CD4-positive, alpha-beta T cell (primary cell): ENCODE measurements at regions of chr2 and their contacts with region 1.

Region 1: DNA sequence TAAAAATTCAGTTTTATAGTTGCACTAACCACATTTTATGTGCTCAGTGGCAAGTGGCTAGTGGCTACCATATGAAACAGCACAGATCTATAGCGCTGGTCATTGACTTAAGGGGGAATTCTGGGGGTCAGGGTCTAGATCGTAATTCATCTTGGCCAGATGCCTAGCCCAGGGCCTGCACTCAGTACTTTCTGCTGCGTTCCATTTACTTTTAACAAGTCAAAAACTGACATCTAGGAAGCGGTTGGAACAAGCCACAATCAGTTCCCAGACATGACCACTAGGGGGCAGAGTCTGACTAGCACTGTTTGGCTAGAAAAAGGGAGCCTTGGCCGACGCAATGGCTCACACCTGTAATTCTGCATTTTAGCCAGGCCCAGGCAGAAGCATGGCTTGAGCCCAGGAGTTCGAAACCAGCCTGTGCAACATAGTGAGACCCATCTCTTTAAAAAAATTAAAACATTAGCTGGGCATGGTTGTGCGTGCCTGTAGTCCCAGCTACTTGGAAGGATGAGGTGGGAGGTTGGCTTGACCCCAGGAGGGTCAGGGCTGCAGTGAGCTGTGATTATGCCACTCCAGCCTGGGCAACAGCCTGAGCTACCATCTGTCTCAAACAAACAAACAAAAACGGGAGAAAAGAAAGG is 9.0 kb upstream of the TMBIM1 start:
- DNase-seq: peak; percentile 79 to 93 (median 86)
- ATAC-seq: peak; percentile 99
- H3K4me3 ChIP-seq: no peak overlapping the region
- H3K4me3 Mint-ChIP-seq: no peak overlapping the region
- H3K27ac ChIP-seq: no peak overlapping the region
- H3K27ac Mint-ChIP-seq: peak overlapping the region; percentile 4
- H3K4me1 ChIP-seq: peaks cover 8% of the 10 kb centered on the region
- H3K4me1 Mint-ChIP-seq: peaks cover 7% of the 10 kb centered on the region
- H3K27me3 ChIP-seq: no peaks in the 10 kb centered on the region
- H3K27me3 Mint-ChIP-seq: no peaks in the 10 kb centered on the region
- CTCF ChIP-seq: peak; percentile 87

Region 2: DNA sequence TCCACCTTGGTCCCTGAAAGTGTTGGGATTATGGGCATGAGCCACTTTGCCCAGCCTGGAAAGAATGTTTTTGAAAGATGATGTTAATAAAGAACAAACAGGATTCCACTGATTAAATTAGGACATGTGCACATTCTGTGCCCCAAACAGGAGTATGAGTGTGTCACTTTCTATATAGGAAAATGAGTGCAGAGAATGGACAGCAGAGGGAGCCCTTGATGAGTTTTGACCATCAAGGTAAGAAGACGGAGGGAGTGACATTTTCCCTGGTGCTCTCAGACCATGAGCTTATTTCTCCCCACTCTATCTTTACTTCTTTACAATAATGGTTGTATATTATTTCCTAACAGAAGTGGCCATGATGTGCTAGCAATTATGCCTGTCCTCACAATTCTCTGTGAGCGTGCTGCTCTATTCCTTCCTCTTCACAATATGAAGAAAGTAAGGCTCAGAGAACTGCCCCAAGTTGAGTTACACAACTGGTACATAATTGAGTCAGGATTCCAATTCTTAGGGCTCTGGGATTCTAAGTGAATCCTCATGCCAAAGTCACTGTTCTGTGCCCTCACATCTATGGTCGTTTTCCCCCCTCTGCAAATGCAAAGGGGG is 1782.0 kb before region 1 on chr2:
- CTCF ChIA-PET with region 1: no interaction called
- POLR2A ChIA-PET with region 1: no interaction called
- intact Hi-C with region 1: no loop called
- DNase-seq: peak in 9 of 14 experiments; percentile 5 to 70 (median 28)
- ATAC-seq: no peak
- H3K4me3 ChIP-seq: no peak overlapping the region
- H3K4me3 Mint-ChIP-seq: no peak overlapping the region
- H3K27ac ChIP-seq: no peak overlapping the region
- H3K27ac Mint-ChIP-seq: no peak overlapping the region
- H3K4me1 ChIP-seq: no peaks in the 10 kb centered on the region
- H3K4me1 Mint-ChIP-seq: no peaks in the 10 kb centered on the region
- H3K27me3 ChIP-seq: no peaks in the 10 kb centered on the region
- H3K27me3 Mint-ChIP-seq: no peaks in the 10 kb centered on the region
- CTCF ChIP-seq: peak; percentile 70

Region 3: DNA sequence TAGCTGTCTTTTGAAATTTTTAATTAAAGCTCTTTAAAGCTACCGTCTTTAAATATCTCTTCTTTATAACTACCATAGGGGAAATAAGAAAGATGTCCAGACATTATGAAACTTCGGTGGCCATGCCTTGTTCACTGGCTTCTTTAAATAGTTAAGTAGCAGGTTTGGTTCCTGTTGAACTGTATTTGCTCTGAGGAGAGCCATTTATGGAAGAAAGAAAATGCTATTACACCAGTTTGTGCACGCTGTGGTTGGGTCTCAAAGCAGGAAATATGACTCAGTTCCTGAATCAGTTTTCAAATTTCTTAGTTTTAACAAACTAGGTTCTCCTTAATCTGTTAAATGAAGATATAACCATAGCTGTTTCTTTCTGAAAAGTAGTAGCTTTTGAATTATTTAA is 72.1 kb before region 1 on chr2:
- CTCF ChIA-PET with region 1: no interaction called
- POLR2A ChIA-PET with region 1: no interaction called
- intact Hi-C with region 1: no loop called
- DNase-seq: peak in 10 of 14 experiments; percentile 13 to 85 (median 36)
- ATAC-seq: peak; percentile 82
- H3K4me3 ChIP-seq: no peak overlapping the region
- H3K4me3 Mint-ChIP-seq: peak overlapping the region; percentile 71
- H3K27ac ChIP-seq: peak overlapping the region; percentile 51 to 60
- H3K27ac Mint-ChIP-seq: peak overlapping the region; percentile 91
- H3K4me1 ChIP-seq: peaks cover 70% of the 10 kb centered on the region
- H3K4me1 Mint-ChIP-seq: peaks cover 78% of the 10 kb centered on the region
- H3K27me3 ChIP-seq: no peaks in the 10 kb centered on the region
- H3K27me3 Mint-ChIP-seq: no peaks in the 10 kb centered on the region
- CTCF ChIP-seq: no peak

Region 4: DNA sequence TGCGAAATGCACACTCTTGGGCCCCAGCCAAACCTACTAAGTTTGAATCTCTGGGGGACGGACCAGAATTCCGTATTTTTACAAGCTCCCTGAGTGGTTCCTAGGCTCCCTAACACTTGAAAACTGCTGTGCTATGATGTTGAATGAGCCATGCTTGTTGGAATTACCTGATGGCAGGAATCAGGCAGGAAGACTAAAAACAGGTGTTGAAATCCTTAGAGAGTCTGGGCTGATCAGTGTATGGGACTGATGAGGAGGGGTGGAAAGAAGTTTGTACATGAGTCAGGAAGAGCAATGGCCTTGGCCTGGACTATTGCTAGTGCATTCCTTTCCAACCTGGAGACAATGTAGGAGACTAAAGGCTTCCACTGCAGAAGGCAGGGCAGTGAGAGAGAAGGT is 15.9 kb after region 1 on chr2:
- CTCF ChIA-PET with region 1: interaction called, 6 read pairs
- POLR2A ChIA-PET with region 1: interaction called, 7 read pairs
- intact Hi-C with region 1: loop called in 1 of 2 experiments (anchors 2 kb)
- DNase-seq: no peak
- ATAC-seq: no peak
- H3K4me3 ChIP-seq: no peak overlapping the region
- H3K4me3 Mint-ChIP-seq: peak overlapping the region; percentile 40
- H3K27ac ChIP-seq: peak overlapping the region; percentile 60 to 67
- H3K27ac Mint-ChIP-seq: peak overlapping the region; percentile 97
- H3K4me1 ChIP-seq: peaks cover 47% of the 10 kb centered on the region
- H3K4me1 Mint-ChIP-seq: peaks cover 56% of the 10 kb centered on the region
- H3K27me3 ChIP-seq: no peaks in the 10 kb centered on the region
- H3K27me3 Mint-ChIP-seq: no peaks in the 10 kb centered on the region
- CTCF ChIP-seq: no peak

Region 5: GRCh38 chr2:218360447-218360846 is 59.1 kb after region 1 on chr2:
- CTCF ChIA-PET with region 1: interaction called, 19 read pairs
- POLR2A ChIA-PET with region 1: interaction called, 4 read pairs
- intact Hi-C with region 1: loop called (anchors 1 kb)
- DNase-seq: peak in 2 of 14 experiments; percentile 45 to 63
- ATAC-seq: no peak
- H3K4me3 ChIP-seq: no peak overlapping the region
- H3K4me3 Mint-ChIP-seq: no peak overlapping the region
- H3K27ac ChIP-seq: no peak overlapping the region
- H3K27ac Mint-ChIP-seq: no peak overlapping the region
- H3K4me1 ChIP-seq: peaks cover 8% of the 10 kb centered on the region
- H3K4me1 Mint-ChIP-seq: peaks cover 2% of the 10 kb centered on the region
- H3K27me3 ChIP-seq: no peaks in the 10 kb centered on the region
- H3K27me3 Mint-ChIP-seq: no peaks in the 10 kb centered on the region
- CTCF ChIP-seq: no peak

Region 6: GRCh38 chr2:218466016-218466521 is 164.8 kb after region 1 on chr2:
- CTCF ChIA-PET with region 1: no interaction called
- POLR2A ChIA-PET with region 1: no interaction called
- intact Hi-C with region 1: loop called in 1 of 2 experiments (anchors 1 kb)
- DNase-seq: peak in 3 of 14 experiments; percentile 13 to 31 (median 30)
- ATAC-seq: no peak
- H3K4me3 ChIP-seq: no peak overlapping the region
- H3K4me3 Mint-ChIP-seq: no peak overlapping the region
- H3K27ac ChIP-seq: no peak overlapping the region
- H3K27ac Mint-ChIP-seq: no peak overlapping the region
- H3K4me1 ChIP-seq: no peaks in the 10 kb centered on the region
- H3K4me1 Mint-ChIP-seq: peaks cover 7% of the 10 kb centered on the region
- H3K27me3 ChIP-seq: no peaks in the 10 kb centered on the region
- H3K27me3 Mint-ChIP-seq: no peaks in the 10 kb centered on the region
- CTCF ChIP-seq: peak; percentile 74